Activated naive CD4-positive, alpha-beta T cell treated with anti-CD3 and anti-CD28 coated beads for 36 hours (primary cell): ENCODE measurements at regions of chr1 and their contacts with region 1.

Region 1: DNA sequence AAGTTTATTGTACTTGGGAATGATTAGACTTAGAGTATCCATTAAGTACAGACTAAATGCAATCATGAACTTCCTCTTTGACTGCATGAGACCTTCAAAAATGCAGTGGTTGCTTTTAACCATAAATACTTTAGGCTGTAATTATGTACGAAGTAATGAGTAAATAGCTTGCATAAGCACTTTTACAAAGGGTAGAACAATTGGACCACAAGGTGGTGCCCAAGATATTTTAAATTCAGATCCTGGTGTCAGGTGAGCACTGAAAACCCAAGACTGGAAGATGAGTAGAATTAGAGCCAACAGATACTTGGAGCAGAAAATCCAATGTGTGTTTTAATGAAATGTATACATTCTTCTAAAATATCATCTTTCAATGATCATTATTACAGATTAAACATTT is 43.4 kb upstream of the RHOU start:
- DNase-seq: peak; percentile 46
- H3K4me3 Mint-ChIP-seq: no peak overlapping the region
- H3K27ac Mint-ChIP-seq: no peak overlapping the region
- H3K4me1 Mint-ChIP-seq: peaks cover 10% of the 10 kb centered on the region
- H3K27me3 Mint-ChIP-seq: peaks cover 9% of the 10 kb centered on the region

Region 2: GRCh38 chr1:228349701-228350171 is 342.2 kb before region 1 on chr1:
- CTCF ChIA-PET with region 1: no interaction called
- intact Hi-C with region 1: no loop called
- DNase-seq: no peak
- H3K4me3 Mint-ChIP-seq: no peak overlapping the region
- H3K27ac Mint-ChIP-seq: no peak overlapping the region
- H3K4me1 Mint-ChIP-seq: no peaks in the 10 kb centered on the region
- H3K27me3 Mint-ChIP-seq: no peaks in the 10 kb centered on the region

Region 3: DNA sequence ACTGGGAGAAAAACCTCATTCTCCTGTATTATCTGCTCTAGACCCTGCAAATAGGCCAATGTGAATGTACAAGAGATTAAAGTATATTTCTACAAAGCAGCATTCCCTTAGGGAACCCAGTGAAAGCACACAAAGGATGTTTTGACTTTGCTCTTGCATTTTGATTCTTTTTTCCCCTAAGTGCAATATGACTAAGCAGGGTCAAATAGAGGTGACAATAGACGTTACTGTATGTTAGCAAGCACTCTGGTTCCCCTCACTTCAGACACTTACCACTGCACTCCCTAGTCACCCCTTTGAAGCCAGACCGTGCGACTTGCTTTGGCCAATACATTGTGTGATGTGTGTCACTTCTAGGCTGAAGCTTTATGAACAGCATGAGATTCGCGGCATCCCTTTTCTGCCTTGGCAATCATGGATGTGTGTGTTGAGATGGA is 253.0 kb after region 1 on chr1:
- CTCF ChIA-PET with region 1: no interaction called
- intact Hi-C with region 1: no loop called
- DNase-seq: no peak
- H3K4me3 Mint-ChIP-seq: no peak overlapping the region
- H3K27ac Mint-ChIP-seq: no peak overlapping the region
- H3K4me1 Mint-ChIP-seq: peaks cover 2% of the 10 kb centered on the region
- H3K27me3 Mint-ChIP-seq: no peaks in the 10 kb centered on the region

Region 4: DNA sequence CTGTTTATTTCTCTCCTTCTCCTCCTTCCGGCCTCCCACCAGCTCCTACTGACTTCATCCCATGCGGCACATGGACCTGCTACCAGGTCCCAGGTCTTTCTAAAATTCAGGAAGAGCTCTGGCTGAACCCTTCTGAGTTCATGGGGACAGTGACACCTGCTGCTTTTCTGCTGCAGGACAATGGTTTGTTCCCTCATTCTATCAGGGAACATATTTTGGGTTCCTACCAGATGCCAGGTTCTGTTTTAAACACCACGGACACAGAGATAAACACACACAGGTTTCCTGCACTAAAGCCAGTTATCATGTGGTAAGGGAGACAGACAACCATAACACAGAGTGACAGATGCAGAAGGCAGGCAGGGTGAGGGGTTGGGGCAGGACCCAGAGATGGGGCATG is 464.9 kb after region 1 on chr1:
- CTCF ChIA-PET with region 1: interaction called, 4 read pairs
- intact Hi-C with region 1: loop called (anchors 10 kb)
- DNase-seq: no peak
- H3K4me3 Mint-ChIP-seq: no peak overlapping the region
- H3K27ac Mint-ChIP-seq: no peak overlapping the region
- H3K4me1 Mint-ChIP-seq: peaks cover 21% of the 10 kb centered on the region
- H3K27me3 Mint-ChIP-seq: no peaks in the 10 kb centered on the region